Psoas muscle (tissue), 8 donors: ENCODE measurements at regions of chr10 and their contacts with region 1.

Region 1: GRCh38 chr10:88932539-88933256 is 19.9 kb downstream of the ACTA2 start:
- DNase-seq: peak; percentile 24 to 54
- ATAC-seq: peak; percentile 68 to 83 (median 78)
- H3K4me3 ChIP-seq: no peak overlapping the region
- H3K27ac ChIP-seq: no peak overlapping the region
- H3K4me1 ChIP-seq: peaks cover 3% of the 10 kb centered on the region
- H3K27me3 ChIP-seq: no peaks in the 10 kb centered on the region
- CTCF ChIP-seq: peak; percentile 79

Region 2: GRCh38 chr10:88879534-88880281 is 53.0 kb before region 1 on chr10 and contains the start of gene STAMBPL1:
- intact Hi-C with region 1: no loop called
- DNase-seq: peak; percentile 58 to 72
- ATAC-seq: peak; percentile 31 to 61 (median 42)
- H3K4me3 ChIP-seq: peak within 1 kb of the TSS; percentile 73
- H3K27ac ChIP-seq: peak within 1 kb of the TSS; percentile 75
- H3K4me1 ChIP-seq: peaks cover 7% of the 10 kb centered on the region
- H3K27me3 ChIP-seq: peaks cover 0 to 39% (median 0%) of the 10 kb centered on the region in 3 donors
- CTCF ChIP-seq: no peak
- total RNA-seq, gene STAMBPL1: 0.90 to 1.4 (median 1.0) TPM

Region 3: GRCh38 chr10:88986549-88987242 is 54.0 kb after region 1 on chr10:
- intact Hi-C with region 1: loop called (anchors 2 kb)
- DNase-seq: no peak
- ATAC-seq: no peak
- H3K4me3 ChIP-seq: no peak overlapping the region
- H3K27ac ChIP-seq: no peak overlapping the region
- H3K4me1 ChIP-seq: no peaks in the 10 kb centered on the region
- H3K27me3 ChIP-seq: no peaks in the 10 kb centered on the region
- CTCF ChIP-seq: peak; percentile 76

Region 4: GRCh38 chr10:89042562-89042961 is 109.9 kb after region 1 on chr10:
- intact Hi-C with region 1: no loop called
- DNase-seq: no peak
- ATAC-seq: no peak
- H3K4me3 ChIP-seq: no peak overlapping the region
- H3K27ac ChIP-seq: no peak overlapping the region
- H3K4me1 ChIP-seq: no peaks in the 10 kb centered on the region
- H3K27me3 ChIP-seq: no peaks in the 10 kb centered on the region
- CTCF ChIP-seq: no peak

Region 5: DNA sequence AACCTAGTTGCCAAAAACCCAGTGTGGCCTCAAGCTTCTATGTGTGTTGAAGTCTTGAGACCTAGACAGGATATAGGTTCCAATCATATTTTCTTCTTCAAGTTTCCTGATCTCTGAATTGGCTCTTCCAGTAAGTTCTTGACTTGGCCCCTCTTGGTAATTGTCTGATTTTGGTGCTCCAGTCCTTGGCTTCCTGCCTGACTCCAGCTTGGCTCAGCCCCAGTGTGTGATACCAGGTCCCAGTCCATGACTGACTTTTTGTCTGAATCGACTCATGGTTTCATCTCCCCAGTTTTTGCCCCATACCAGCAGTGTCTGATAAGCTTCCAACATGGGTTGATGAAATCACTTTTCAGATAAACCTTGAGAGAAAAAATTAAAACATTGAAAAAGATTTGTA is 130.2 kb after region 1 on chr10:
- intact Hi-C with region 1: no loop called
- DNase-seq: peak; percentile 28 to 62
- ATAC-seq: no peak
- H3K4me3 ChIP-seq: no peak overlapping the region
- H3K27ac ChIP-seq: no peak overlapping the region
- H3K4me1 ChIP-seq: no peaks in the 10 kb centered on the region
- H3K27me3 ChIP-seq: no peaks in the 10 kb centered on the region
- CTCF ChIP-seq: no peak